OCI-LY7 (cell line): ENCODE measurements at regions of chr7 and their contacts with region 1.

Region 1: GRCh38 chr7:24896031-24896501 is 83.9 kb downstream of the OSBPL3 start:
- DNase-seq: peak; percentile 95
- H3K4me3 ChIP-seq: peak overlapping the region; percentile 33
- H3K27ac ChIP-seq: peak overlapping the region; percentile 93
- H3K4me1 ChIP-seq: peaks cover 98% of the 10 kb centered on the region
- CTCF ChIP-seq: peak; percentile 74

Region 2: GRCh38 chr7:24836084-24836483 is 60.0 kb before region 1 on chr7:
- CTCF ChIA-PET with region 1: interaction called, 4 read pairs
- POLR2A ChIA-PET with region 1: interaction called, 15 read pairs
- intact Hi-C with region 1: loop called (anchors 1 kb)
- DNase-seq: peak; percentile 93
- H3K4me3 ChIP-seq: peak overlapping the region; percentile 34
- H3K27ac ChIP-seq: peak overlapping the region; percentile 95
- H3K4me1 ChIP-seq: peaks cover 89% of the 10 kb centered on the region
- CTCF ChIP-seq: no peak

Region 3: DNA sequence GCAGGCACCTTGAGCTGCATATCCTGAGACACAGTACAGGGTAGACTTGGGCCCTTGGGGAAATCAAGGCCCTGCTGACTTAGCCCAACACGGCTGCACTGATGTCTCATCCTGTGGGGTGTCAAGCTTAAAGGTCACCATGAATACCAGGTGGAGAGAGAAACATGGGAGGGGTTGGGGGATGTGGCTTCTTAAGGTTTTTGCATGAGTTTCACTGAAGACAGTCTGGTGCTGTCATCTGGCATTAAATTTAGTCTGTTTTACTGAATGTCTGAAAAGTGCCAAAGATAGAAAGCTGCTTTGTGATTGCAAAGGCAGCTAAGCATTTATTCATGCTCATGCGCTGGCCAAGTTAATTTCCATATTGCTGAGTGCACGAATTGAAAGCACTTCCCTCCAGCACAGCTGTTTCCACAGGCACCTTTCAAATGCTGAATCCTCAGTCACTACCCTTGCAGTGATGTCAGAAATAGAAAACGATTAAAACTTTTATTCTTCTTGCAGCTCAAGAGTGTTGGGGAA is 18.2 kb before region 1 on chr7:
- CTCF ChIA-PET with region 1: interaction called, 23 read pairs
- POLR2A ChIA-PET with region 1: interaction called, 176 read pairs
- intact Hi-C with region 1: loop called (anchors 1 kb)
- DNase-seq: peak; percentile 94
- H3K4me3 ChIP-seq: peak overlapping the region; percentile 51
- H3K27ac ChIP-seq: peak overlapping the region; percentile 93
- H3K4me1 ChIP-seq: peaks cover 98% of the 10 kb centered on the region
- CTCF ChIP-seq: no peak

Region 4: GRCh38 chr7:24882989-24883621 is 13.0 kb before region 1 on chr7:
- CTCF ChIA-PET with region 1: interaction called, 23 read pairs
- POLR2A ChIA-PET with region 1: interaction called, 176 read pairs
- intact Hi-C with region 1: loop called (anchors 1 kb)
- DNase-seq: peak; percentile 74
- H3K4me3 ChIP-seq: peak overlapping the region; percentile 41
- H3K27ac ChIP-seq: peak overlapping the region; percentile 71
- H3K4me1 ChIP-seq: peaks cover 93% of the 10 kb centered on the region
- CTCF ChIP-seq: no peak

Region 5: DNA sequence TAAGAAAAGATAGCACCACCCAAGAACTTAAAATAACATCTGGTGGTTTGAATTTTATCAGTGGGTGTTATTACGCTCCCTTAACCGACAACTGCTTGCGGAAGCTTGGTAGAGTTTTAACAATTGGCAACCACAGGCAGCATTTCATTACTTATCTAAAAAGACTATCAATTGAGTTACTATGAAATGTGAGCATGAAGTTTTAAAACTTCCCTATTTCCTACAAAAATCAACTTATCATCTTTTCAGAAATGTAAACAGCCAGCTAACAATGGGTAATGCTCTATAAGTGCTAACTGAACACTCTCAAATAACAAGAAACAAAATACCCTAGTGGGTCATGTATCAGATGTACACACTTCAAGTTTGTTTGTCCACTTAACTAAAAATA is 15.1 kb after region 1 on chr7:
- CTCF ChIA-PET with region 1: interaction called, 4 read pairs
- POLR2A ChIA-PET with region 1: interaction called, 43 read pairs
- intact Hi-C with region 1: no loop called
- DNase-seq: peak; percentile 61
- H3K4me3 ChIP-seq: peak overlapping the region; percentile 29
- H3K27ac ChIP-seq: peak overlapping the region; percentile 72
- H3K4me1 ChIP-seq: peaks cover 96% of the 10 kb centered on the region
- CTCF ChIP-seq: no peak

Region 6: DNA sequence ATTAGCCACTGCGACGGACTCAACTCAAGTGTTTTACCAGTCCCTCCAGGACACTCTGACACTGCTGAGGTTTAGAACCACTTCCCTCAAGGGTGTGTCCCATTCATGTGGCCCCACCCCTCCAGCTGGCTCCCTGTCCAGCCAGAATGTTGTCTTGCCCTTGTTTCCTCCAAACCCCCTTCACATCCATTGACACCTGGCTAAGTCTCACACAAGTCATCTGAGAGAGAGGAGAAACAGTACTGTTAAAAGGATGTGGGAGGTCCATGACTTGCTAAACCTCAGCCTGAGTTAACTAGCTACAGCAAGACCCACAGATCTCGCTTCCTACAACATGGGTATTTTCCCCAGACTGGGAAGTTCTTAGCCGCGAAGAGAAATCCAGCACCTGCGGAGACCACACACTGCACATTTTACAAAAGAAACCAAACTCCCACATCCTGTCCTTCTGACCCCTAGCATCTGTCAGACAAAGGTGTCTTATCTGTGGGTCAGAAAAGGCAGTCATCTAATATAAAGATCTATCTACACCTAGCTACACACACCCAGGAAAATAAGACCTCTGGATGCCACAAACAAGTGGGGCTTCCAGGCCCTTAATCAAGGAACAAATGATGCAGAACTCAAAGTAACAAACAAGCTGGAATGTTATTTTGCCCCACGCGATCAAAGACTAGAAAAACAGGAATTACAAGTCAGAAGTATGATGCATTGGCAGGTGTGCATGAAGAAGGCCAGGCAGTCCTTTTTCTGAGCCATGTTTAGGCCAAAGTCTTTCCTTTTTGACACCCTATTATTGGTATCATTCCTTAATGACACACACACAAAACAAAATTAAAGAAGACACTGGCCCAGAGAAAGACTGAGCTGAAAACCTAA is 70.0 kb after region 1 on chr7:
- CTCF ChIA-PET with region 1: interaction called, 3 read pairs
- POLR2A ChIA-PET with region 1: interaction called, 4 read pairs
- intact Hi-C with region 1: loop called (anchors 2 kb)
- DNase-seq: peak; percentile 83
- H3K4me3 ChIP-seq: peak overlapping the region; percentile 34
- H3K27ac ChIP-seq: peak overlapping the region; percentile 81
- H3K4me1 ChIP-seq: peaks cover 88% of the 10 kb centered on the region
- CTCF ChIP-seq: no peak; the same call in 1 of the 2 replicates

Region 7: GRCh38 chr7:25069900-25070443 is 173.9 kb after region 1 on chr7:
- CTCF ChIA-PET with region 1: no interaction called
- POLR2A ChIA-PET with region 1: interaction called, 3 read pairs
- intact Hi-C with region 1: loop called (anchors 1 kb)
- DNase-seq: peak; percentile 85
- H3K4me3 ChIP-seq: no peak overlapping the region
- H3K27ac ChIP-seq: no peak overlapping the region
- H3K4me1 ChIP-seq: peaks cover 32% of the 10 kb centered on the region
- CTCF ChIP-seq: peak; percentile 93